Sciatic nerve (tissue), 2 donors: ENCODE measurements at regions of chr12 and their contacts with region 1.

Region 1: GRCh38 chr12:8658346-8658745 is 4.3 kb downstream of the MFAP5 start:
- DNase-seq: no peak
- ATAC-seq: peak; percentile 50

Region 2: GRCh38 chr12:9049520-9050133 is 391.3 kb after region 1 on chr12:
- intact Hi-C with region 1: loop called (anchors 10 kb)
- DNase-seq: no peak
- ATAC-seq: peak; percentile 57